Activated T-helper 2 cell treated with anti-CD3 and anti-CD28 coated beads, Interferon-gamma antibody, Interleukin-2, Interleukin-4, amounts not matched to agents 10 μg/mL and 5 μg/mL and 100 μg/mL, durations not matched to agents 14 hours and 24 hours and 36 hours (primary cell): ENCODE measurements at regions of chr16 and their contacts with region 1.

Region 1: DNA sequence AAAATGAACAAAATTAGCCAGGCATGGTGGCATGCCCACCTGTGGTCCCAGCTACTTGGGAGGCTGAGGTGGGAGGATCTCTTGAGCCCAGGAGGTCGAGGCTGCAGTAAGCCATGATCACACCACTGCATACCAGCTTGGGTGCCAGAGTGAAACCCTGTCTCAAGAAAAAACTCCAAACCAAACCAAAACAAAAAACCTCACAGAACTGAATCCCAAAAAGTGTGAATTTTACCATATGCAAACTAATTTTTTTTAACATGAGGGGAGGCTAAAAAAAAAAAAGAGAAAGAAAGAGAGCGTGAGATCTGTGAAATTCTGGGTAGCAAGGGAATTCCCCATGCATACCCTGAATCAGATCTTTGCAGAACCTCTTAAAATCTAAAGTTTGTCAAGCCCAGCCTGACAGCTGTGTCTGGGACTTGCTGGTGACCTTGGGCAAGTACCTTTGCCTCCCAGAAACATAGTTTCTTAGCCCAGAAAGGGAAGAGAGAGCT is 17.1 kb upstream of the CDH1 start:
- DNase-seq: no peak
- H3K4me3 Mint-ChIP-seq: no peak overlapping the region
- H3K27ac Mint-ChIP-seq: no peak overlapping the region
- H3K4me1 Mint-ChIP-seq: peaks cover 5% of the 10 kb centered on the region
- H3K27me3 Mint-ChIP-seq: no peaks in the 10 kb centered on the region

Region 2: GRCh38 chr16:68764862-68765261 is 44.8 kb after region 1 on chr16:
- intact Hi-C with region 1: loop called (anchors 1 kb)
- DNase-seq: peak; percentile 61
- H3K4me3 Mint-ChIP-seq: peak overlapping the region; percentile 45
- H3K27ac Mint-ChIP-seq: peak overlapping the region; percentile 84
- H3K4me1 Mint-ChIP-seq: peaks cover 43% of the 10 kb centered on the region
- H3K27me3 Mint-ChIP-seq: peaks cover 13% of the 10 kb centered on the region